ENCODE measurements at regions of chr4 and their contacts with region 1.

Region 1: GRCh38 chr4:139740531-139741041 is 75.0 kb downstream of the MGST2 start:
- DNase-seq: peak; percentile 71 to 77 (median 72)
- ATAC-seq: peak; percentile 90 to 92 (median 92)
- H3K4me3 ChIP-seq: peak overlapping the region; percentile 9 to 26 (median 14)
- H3K27ac ChIP-seq: peak overlapping the region; percentile 74 to 87 (median 76)
- H3K4me1 ChIP-seq: peaks cover 0 to 16% (median 6%) of the 10 kb centered on the region in 4 donors
- H3K27me3 ChIP-seq: no peaks in the 10 kb centered on the region
- CTCF ChIP-seq: peak; percentile 37 to 47 (median 43)
- POLR2A ChIP-seq: no peak

Region 2: GRCh38 chr4:139651282-139652194 is 89.0 kb before region 1 on chr4:
- intact Hi-C with region 1: loop called in 1 of 2 experiments (anchors 10 kb)
- DNase-seq: peak; percentile 75 to 82 (median 78)
- ATAC-seq: peak; percentile 88 to 92 (median 90)
- H3K4me3 ChIP-seq: no peak overlapping the region
- H3K27ac ChIP-seq: no peak overlapping the region
- H3K4me1 ChIP-seq: peaks cover 0 to 3% (median 0%) of the 10 kb centered on the region in 4 donors
- H3K27me3 ChIP-seq: no peaks in the 10 kb centered on the region
- CTCF ChIP-seq: peak; percentile 85 to 95 (median 94)
- POLR2A ChIP-seq: no peak

Region 3: GRCh38 chr4:139901531-139902320 is 161.1 kb after region 1 on chr4:
- intact Hi-C with region 1: no loop called
- DNase-seq: no peak
- ATAC-seq: peak in 3 of 4 donors; percentile 20 to 62 (median 37)
- H3K4me3 ChIP-seq: peak overlapping the region in 1 of 3 donors; percentile 26
- H3K27ac ChIP-seq: no peak overlapping the region
- H3K4me1 ChIP-seq: peaks cover 0 to 17% (median 1%) of the 10 kb centered on the region in 4 donors
- H3K27me3 ChIP-seq: no peaks in the 10 kb centered on the region
- CTCF ChIP-seq: no peak
- POLR2A ChIP-seq: no peak

Measured in right lobe of liver (tissue), 6 donors.